ENCODE measurements at regions of chr18 and their contacts with region 1.

Region 1: GRCh38 chr18:79246348-79247108 is 149.2 kb upstream of the NFATC1 start:
- DNase-seq: peak; percentile 73 to 81
- ATAC-seq: peak; percentile 94 to 100 (median 99)
- H3K4me3 ChIP-seq: no peak overlapping the region
- H3K4me3 Mint-ChIP-seq: peak overlapping the region; percentile 31
- H3K27ac ChIP-seq: no peak overlapping the region
- H3K27ac Mint-ChIP-seq: peak overlapping the region in 1 of 2 donors; percentile 61
- H3K4me1 ChIP-seq: peaks cover 6% of the 10 kb centered on the region
- H3K4me1 Mint-ChIP-seq: peaks cover 19 to 21% of the 10 kb centered on the region in 2 donors
- H3K27me3 ChIP-seq: no peaks in the 10 kb centered on the region
- H3K27me3 Mint-ChIP-seq: no peaks in the 10 kb centered on the region
- CTCF ChIP-seq: peak; percentile 97

Region 2: DNA sequence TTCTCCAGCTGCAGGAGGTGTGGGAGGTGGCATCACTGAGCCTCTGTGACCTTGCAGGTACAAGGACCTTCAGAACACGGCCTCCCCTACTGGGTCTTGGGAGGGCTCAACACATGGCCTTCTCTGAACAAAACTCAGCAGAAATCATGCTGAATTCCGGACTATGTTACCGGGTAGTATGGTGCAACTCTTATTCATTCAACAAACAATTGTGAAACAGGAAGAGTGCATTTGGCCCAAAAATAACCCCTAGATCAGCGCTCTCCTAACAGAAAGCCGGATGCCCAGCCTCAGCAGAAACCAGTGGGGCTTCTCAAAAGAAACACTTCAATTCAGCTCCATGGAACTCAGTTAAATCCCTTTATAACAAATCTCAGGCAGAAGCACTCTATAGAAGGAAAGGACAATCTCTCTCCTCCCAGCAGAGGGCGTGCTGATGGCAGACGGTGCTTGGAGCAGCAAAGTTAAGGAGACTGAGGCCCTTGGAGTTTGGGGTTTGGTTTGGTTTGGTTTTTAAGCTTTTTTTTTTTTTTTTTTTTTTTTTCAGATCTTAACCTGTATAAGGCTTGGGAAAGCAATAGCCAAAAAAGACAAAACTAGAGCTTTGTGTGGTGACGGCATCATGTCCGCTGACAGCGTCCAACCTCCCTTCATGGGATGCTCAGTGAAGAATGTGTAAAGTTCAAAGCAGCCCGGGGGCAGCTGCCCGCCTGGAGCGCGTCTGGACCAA is 371.1 kb before region 1 on chr18:
- intact Hi-C with region 1: loop called (anchors 1 kb)
- DNase-seq: peak in 1 of 2 donors; percentile 41
- ATAC-seq: peak in 1 of 3 donors; percentile 51
- H3K4me3 ChIP-seq: no peak overlapping the region
- H3K4me3 Mint-ChIP-seq: no peak overlapping the region
- H3K27ac ChIP-seq: no peak overlapping the region
- H3K27ac Mint-ChIP-seq: no peak overlapping the region
- H3K4me1 ChIP-seq: no peaks in the 10 kb centered on the region
- H3K4me1 Mint-ChIP-seq: no peaks in the 10 kb centered on the region
- H3K27me3 ChIP-seq: no peaks in the 10 kb centered on the region
- H3K27me3 Mint-ChIP-seq: peaks cover 15 to 18% of the 10 kb centered on the region in 2 donors
- CTCF ChIP-seq: peak; percentile 50

Region 3: DNA sequence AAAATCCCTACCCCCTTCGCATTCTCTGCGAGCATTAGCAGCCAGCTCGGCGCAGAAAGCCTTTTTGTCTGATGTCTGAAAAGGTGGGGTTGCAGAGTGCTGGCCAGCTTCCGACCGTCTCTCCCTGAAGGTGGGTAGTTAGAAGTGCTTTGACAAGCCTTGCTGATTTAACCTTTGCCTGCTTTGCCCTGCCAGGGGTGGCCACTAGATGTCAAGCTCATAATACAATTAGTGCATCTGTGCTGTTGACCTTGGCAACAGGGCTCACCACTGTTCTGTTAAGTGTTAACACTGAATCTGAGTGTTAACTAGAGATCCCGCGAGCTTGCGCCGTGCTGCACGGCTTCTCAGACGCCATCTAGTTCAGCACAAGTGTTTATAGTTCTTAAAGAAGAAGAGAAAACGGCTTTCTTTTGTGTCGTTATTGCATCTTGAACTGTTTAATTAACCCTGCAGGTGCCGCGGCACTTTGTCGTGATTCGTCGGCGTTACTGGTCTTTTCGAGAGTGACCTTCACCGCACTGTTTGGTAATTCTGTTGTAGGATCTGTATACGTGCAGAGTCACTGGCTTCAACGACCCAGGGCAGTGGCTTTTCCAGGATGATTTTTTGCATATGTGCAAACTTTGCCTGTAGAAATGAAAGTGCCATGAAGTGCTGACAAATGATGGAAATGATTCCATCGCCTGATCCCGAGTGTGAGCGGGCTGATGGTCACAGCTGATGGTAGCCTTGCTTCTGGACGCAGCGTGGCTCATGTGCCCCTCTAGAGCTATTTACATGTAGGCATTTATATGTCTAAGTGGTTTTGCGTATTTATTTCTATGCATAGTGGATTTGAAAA is 261.4 kb before region 1 on chr18:
- intact Hi-C with region 1: loop called (anchors 10 kb)
- DNase-seq: peak in 1 of 2 donors; percentile 37
- ATAC-seq: peak; percentile 55 to 67 (median 66)
- H3K4me3 ChIP-seq: no peak overlapping the region
- H3K4me3 Mint-ChIP-seq: no peak overlapping the region
- H3K27ac ChIP-seq: no peak overlapping the region
- H3K27ac Mint-ChIP-seq: no peak overlapping the region
- H3K4me1 ChIP-seq: peaks cover 3% of the 10 kb centered on the region
- H3K4me1 Mint-ChIP-seq: peaks cover 5 to 7% of the 10 kb centered on the region in 2 donors
- H3K27me3 ChIP-seq: peaks cover 53% of the 10 kb centered on the region
- H3K27me3 Mint-ChIP-seq: peaks cover 57 to 65% of the 10 kb centered on the region in 2 donors
- CTCF ChIP-seq: no peak